Psoas muscle (tissue), 8 donors: ENCODE measurements at regions of chr2 and their contacts with region 1.

Region 1: DNA sequence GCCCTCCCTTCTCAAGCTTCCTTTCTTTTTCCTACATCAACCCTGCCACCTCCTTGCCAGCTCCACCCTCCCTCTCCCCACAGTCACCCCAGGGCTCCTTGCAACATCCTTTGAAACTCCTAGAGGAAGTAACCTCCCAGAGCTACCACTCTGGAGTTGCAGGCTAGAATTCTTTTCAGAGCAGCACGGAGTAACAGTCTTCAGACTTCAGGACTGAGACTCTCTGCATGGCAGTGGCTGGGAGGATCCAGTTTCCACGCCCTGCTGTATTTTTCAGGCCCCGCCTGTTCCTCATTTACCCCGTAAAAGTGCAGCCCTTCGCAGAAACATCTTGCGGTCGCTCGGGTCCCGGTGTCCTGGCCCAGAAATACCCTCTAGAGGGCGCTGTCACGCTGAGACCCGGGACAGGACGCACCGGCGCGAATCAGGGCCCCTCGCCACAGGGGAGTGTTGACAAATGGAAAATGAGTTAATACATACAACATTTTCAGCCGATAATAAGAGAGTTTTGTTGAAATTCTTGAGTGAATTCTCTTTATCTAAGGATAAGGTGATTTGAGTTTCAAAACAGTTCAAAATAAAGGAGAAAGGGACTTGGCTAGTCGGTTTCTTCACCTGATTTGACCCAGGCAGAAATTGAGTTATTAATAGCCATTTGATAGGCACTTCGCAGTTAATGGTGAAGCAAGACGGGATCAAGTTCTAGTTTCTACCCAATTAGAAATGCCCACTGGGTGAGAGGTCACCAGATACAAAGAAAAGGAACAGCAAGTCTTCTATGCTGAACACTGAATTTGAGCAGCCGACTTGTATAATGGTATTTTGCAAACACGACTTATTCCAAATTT is 18.5 kb upstream of the NTSR2 start:
- DNase-seq: peak; percentile 90 to 93
- ATAC-seq: peak; percentile 80 to 86 (median 84)
- H3K4me3 ChIP-seq: peak overlapping the region; percentile 57
- H3K27ac ChIP-seq: peak overlapping the region; percentile 90
- H3K4me1 ChIP-seq: peaks cover 54% of the 10 kb centered on the region
- H3K27me3 ChIP-seq: no peaks in the 10 kb centered on the region
- CTCF ChIP-seq: peak; percentile 82

Region 2: GRCh38 chr2:11743846-11744553 is 55.6 kb after region 1 on chr2:
- intact Hi-C with region 1: loop called in 1 of 2 experiments (anchors 2 kb)
- DNase-seq: peak; percentile 96 to 98
- ATAC-seq: peak; percentile 86 to 90 (median 88)
- H3K4me3 ChIP-seq: peak overlapping the region; percentile 54
- H3K27ac ChIP-seq: peak overlapping the region; percentile 92
- H3K4me1 ChIP-seq: peaks cover 47% of the 10 kb centered on the region
- H3K27me3 ChIP-seq: no peaks in the 10 kb centered on the region
- CTCF ChIP-seq: no peak